ENCODE measurements at regions of chr11 and their contacts with region 1.

Region 1: DNA sequence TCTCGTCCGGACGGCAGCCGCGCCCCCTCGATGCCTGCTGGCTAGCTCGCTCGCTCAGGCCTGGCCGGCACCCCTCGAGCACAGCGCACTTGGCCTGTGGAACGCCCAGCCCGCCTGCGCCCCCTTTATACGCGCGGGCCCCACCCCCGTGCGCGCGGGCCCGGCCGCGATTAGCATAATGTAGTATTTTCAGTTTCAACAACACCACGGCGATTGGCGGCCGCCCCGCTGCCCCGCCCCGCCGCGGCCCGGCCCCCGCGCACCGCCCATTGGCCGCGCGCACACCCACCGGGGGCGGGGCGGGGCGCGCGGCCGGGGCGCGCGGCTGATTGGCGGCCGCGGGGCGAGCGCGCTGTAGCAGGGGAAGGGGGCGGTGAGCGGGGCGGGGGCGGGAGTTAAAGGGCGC is at the start of gene CDKN1C:
- DNase-seq: peak; percentile 82
- H3K4me3 Mint-ChIP-seq: peak within 1 kb of the TSS; percentile 80
- H3K27ac Mint-ChIP-seq: peak within 1 kb of the TSS; percentile 24
- H3K4me1 Mint-ChIP-seq: peaks cover 3% of the 10 kb centered on the region
- H3K27me3 Mint-ChIP-seq: peaks cover 2% of the 10 kb centered on the region
- total RNA-seq, gene CDKN1C: 0.41 to 0.69 TPM

Region 2: GRCh38 chr11:2123116-2123960 is 762.3 kb before region 1 on chr11:
- CTCF ChIA-PET with region 1: no interaction called
- POLR2A ChIA-PET with region 1: no interaction called
- intact Hi-C with region 1: no loop called
- DNase-seq: no peak
- H3K4me3 Mint-ChIP-seq: no peak overlapping the region
- H3K27ac Mint-ChIP-seq: no peak overlapping the region
- H3K4me1 Mint-ChIP-seq: no peaks in the 10 kb centered on the region
- H3K27me3 Mint-ChIP-seq: peaks cover 29% of the 10 kb centered on the region

Region 3: GRCh38 chr11:2305140-2305840 is 580.4 kb before region 1 on chr11:
- CTCF ChIA-PET with region 1: interaction called, 6 read pairs
- POLR2A ChIA-PET with region 1: no interaction called
- intact Hi-C with region 1: loop called (anchors 10 kb)
- DNase-seq: peak; percentile 88
- H3K4me3 Mint-ChIP-seq: no peak overlapping the region
- H3K27ac Mint-ChIP-seq: no peak overlapping the region
- H3K4me1 Mint-ChIP-seq: peaks cover 42% of the 10 kb centered on the region
- H3K27me3 Mint-ChIP-seq: no peaks in the 10 kb centered on the region

Region 4: GRCh38 chr11:2444821-2445745 is 440.6 kb before region 1 on chr11 and contains the start of gene KCNQ1:
- CTCF ChIA-PET with region 1: interaction called, 10 read pairs
- POLR2A ChIA-PET with region 1: no interaction called
- intact Hi-C with region 1: loop called (anchors 5 kb)
- DNase-seq: peak; percentile 52
- H3K4me3 Mint-ChIP-seq: peak within 1 kb of the TSS; percentile 89
- H3K27ac Mint-ChIP-seq: peak within 1 kb of the TSS; percentile 4
- H3K4me1 Mint-ChIP-seq: peaks cover 33% of the 10 kb centered on the region
- H3K27me3 Mint-ChIP-seq: no peaks in the 10 kb centered on the region
- total RNA-seq, gene KCNQ1: 10.7 to 10.8 TPM

Region 5: DNA sequence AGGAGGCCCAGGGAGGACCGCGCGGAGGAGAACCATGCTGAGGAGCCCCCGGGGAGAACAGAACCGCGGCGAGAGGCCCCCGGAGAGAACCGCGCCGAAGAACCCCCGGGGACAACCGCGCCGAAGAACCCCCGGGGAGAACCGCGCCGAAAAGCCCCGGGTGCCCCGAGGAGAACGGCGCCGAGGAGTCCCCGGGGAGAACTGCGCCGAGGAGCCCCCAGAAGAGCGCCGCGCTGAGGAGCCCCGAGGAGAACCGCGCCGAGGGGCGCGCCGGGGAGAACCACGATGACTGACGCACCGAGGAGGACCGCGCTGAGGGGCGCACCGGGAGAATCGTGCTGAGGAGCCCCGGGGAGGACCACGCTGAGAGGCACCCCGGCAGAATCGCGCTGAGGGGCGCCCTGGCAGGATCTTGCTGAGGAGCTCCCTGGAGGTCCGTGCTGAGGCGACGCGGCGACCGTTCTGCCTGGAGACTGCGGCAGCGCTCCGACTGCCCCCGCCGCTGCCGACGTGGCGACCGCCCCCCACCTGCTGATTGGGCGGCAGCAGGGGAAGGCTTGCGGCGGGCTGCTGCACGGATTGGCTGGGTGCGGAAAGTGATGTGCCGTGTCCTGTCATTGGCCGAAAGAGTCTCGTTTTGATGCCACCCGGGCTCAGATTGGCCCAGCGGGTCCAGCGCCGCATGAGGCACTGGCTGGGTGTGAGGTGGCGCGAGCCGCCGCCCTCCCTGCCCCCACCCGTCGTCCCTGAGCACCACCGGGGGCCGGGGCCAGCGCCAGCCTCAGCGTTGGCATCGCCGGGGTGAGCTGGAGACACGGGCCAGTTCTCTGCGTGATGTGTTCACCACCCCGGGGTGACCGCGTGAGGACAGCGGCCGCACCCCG is 185.9 kb before region 1 on chr11 and contains the start of gene KCNQ1OT1:
- CTCF ChIA-PET with region 1: no interaction called
- POLR2A ChIA-PET with region 1: interaction called, 3 read pairs
- intact Hi-C with region 1: loop called (anchors 10 kb)
- DNase-seq: peak; percentile 92
- H3K4me3 Mint-ChIP-seq: peak within 1 kb of the TSS; percentile 79
- H3K27ac Mint-ChIP-seq: peak within 1 kb of the TSS; percentile 13
- H3K4me1 Mint-ChIP-seq: peaks cover 8% of the 10 kb centered on the region
- H3K27me3 Mint-ChIP-seq: no peaks in the 10 kb centered on the region
- total RNA-seq, gene KCNQ1OT1: 0.19 TPM

Region 6: GRCh38 chr11:2901854-2902783 is 16.4 kb after region 1 on chr11:
- CTCF ChIA-PET with region 1: interaction called, 43 read pairs
- POLR2A ChIA-PET with region 1: interaction called, 3 read pairs
- intact Hi-C with region 1: no loop called
- DNase-seq: peak; percentile 98
- H3K4me3 Mint-ChIP-seq: peak overlapping the region; percentile 71
- H3K27ac Mint-ChIP-seq: peak overlapping the region; percentile 62
- H3K4me1 Mint-ChIP-seq: peaks cover 32% of the 10 kb centered on the region
- H3K27me3 Mint-ChIP-seq: no peaks in the 10 kb centered on the region

Region 7: DNA sequence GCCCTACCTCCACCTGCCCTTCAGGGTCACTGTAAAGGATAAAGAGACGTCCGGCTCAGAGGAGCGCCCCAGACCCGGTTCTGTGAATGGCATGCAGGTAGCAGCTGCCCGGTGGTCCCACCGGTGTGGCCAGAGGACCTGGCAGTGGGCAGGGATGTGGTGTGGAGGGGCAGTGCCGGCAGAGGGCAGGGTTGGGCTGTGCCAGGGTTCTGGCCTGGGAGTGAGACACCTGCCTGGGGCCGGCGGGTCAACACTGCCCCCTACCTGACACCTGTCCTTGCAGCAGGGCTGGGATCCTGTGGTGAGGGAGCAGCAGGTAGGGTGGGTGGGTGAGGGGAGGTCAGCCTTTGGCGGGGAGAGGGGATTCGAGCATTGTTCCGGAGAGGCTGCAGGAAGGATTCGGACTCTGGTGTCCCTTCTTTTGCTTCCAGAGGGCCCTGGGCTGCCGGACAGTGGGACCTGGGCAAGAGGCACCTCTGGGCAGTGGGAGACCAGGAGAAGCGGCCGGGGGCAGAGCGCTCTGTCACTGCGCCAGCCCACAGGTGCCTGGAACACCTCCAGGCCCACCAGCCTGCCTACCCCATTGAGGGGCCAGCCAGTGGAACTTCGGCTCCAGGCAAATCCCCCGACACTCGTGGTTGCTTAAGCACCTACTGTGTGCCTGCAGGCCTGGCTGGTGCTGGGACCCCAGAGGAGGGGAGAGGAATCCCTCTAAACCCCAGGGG is 45.2 kb after region 1 on chr11:
- CTCF ChIA-PET with region 1: interaction called, 23 read pairs
- POLR2A ChIA-PET with region 1: no interaction called
- intact Hi-C with region 1: no loop called
- DNase-seq: peak; percentile 80
- H3K4me3 Mint-ChIP-seq: peak overlapping the region; percentile 64
- H3K27ac Mint-ChIP-seq: peak overlapping the region; percentile 25
- H3K4me1 Mint-ChIP-seq: peaks cover 33% of the 10 kb centered on the region
- H3K27me3 Mint-ChIP-seq: peaks cover 11% of the 10 kb centered on the region

Region 8: GRCh38 chr11:3434976-3435375 is 549.3 kb after region 1 on chr11:
- CTCF ChIA-PET with region 1: no interaction called
- POLR2A ChIA-PET with region 1: no interaction called
- intact Hi-C with region 1: no loop called
- DNase-seq: no peak
- H3K4me3 Mint-ChIP-seq: no peak overlapping the region
- H3K27ac Mint-ChIP-seq: no peak overlapping the region
- H3K4me1 Mint-ChIP-seq: no peaks in the 10 kb centered on the region
- H3K27me3 Mint-ChIP-seq: peaks cover 5% of the 10 kb centered on the region